ENCODE measurements at regions of chr20 and their contacts with region 1.

Region 1: DNA sequence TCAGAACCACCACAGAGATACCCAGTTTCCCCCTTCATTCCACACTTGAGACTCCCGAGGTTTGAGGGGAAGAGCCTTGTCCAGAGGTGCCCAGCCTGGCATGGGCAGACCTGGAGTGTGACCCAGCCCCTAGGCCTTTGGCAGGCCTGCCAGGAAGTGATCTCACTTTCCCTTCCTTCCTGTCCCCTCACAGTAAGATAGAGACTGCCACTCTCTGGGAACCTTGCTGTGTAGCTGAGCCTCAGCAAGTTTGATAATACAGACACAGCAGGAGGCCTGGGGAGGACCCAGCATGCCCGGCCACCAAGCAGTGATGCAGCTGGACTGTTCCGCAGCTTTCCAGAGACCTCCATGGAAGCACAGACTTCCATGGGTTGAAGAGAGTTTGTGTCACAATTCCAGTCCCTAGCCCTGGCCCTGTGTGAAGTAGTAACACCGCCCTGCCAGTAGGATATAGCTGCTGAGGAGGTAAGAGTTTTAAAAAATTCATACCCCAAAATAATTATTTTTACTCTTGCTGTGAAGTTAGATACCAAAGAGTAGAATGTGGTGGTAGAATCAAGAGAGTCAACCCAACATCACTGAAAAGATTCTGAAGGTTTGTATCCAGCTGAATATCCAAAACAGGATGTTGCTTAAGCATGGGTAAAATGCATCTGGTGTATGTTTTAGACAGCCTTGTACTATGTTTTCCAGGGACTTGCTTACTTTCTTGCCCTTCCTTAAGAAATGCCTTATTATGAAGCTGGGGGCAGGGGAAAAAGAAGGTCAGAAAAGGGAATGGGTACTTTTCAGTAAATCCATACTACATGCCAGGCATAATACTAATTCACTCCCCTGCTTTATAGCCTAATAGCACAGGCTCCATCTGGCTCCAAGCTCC is 16.3 kb downstream of the PKIG start:
- DNase-seq: no peak
- H3K4me3 Mint-ChIP-seq: no peak overlapping the region
- H3K27ac Mint-ChIP-seq: no peak overlapping the region
- H3K4me1 Mint-ChIP-seq: peaks cover 13% of the 10 kb centered on the region
- H3K27me3 Mint-ChIP-seq: no peaks in the 10 kb centered on the region

Region 2: DNA sequence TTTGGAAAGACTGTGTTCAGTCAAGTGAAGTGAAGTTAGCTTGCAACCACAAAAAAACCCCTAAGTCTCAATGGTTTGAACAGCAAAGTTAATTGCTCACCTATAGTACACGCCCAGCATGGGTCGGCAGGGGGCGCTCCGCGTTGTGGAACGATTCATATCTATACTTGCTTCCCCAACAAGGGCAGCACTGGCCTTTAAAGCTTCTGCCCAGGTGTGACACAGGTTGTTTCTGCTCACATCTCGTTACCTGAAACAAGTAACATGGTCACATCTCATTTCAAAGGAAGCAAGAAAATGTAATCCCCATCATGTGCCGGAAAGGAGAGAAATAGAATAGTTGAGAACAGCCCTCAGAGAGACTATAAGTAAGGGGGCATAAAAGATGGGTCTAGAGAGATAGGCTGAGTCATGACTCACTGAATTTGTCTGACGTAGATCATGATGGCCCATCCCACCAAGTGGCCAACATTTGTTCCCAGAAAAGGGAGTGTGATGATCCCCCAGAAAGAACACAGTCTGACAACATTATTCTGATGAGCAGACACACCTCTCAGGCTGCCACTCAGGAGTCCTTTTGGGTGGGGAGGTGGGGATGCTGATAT is 214.1 kb before region 1 on chr20:
- CTCF ChIA-PET with region 1: interaction called, 11 read pairs
- POLR2A ChIA-PET with region 1: no interaction called
- DNase-seq: peak; percentile 84
- H3K4me3 Mint-ChIP-seq: no peak overlapping the region
- H3K27ac Mint-ChIP-seq: no peak overlapping the region
- H3K4me1 Mint-ChIP-seq: peaks cover 5% of the 10 kb centered on the region
- H3K27me3 Mint-ChIP-seq: peaks cover 18% of the 10 kb centered on the region

Region 3: DNA sequence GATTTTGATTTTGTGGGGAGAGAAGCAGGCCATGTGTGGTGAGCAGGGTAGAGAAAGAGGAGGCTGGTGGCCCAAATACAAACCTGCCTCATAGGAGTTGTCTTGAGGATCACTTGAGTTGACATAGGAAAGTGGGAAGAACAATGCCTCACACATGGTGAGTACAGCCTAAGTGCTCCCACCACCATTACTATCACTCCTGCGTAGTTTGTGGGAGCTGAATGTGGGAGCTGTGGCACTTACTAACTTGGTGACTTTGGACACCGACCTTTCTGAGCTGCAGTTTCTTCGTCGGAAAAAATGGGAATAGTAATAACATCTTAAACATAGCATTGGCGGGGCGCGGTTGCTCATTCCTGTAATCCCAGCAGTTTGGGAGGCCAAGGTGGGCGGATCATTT is 51.2 kb before region 1 on chr20:
- CTCF ChIA-PET with region 1: no interaction called
- POLR2A ChIA-PET with region 1: no interaction called
- DNase-seq: no peak
- H3K4me3 Mint-ChIP-seq: no peak overlapping the region
- H3K27ac Mint-ChIP-seq: no peak overlapping the region
- H3K4me1 Mint-ChIP-seq: peaks cover under 1% of the 10 kb centered on the region
- H3K27me3 Mint-ChIP-seq: peaks cover 4% of the 10 kb centered on the region

Region 4: GRCh38 chr20:44750081-44750805 is 151.6 kb after region 1 on chr20:
- CTCF ChIA-PET with region 1: no interaction called
- POLR2A ChIA-PET with region 1: no interaction called
- DNase-seq: no peak
- H3K4me3 Mint-ChIP-seq: no peak overlapping the region
- H3K27ac Mint-ChIP-seq: no peak overlapping the region
- H3K4me1 Mint-ChIP-seq: peaks cover 9% of the 10 kb centered on the region
- H3K27me3 Mint-ChIP-seq: peaks cover 16% of the 10 kb centered on the region